ENCODE measurements at regions of chr3 and their contacts with region 1.

Region 1: GRCh38 chr3:73432023-73432705 is 192.6 kb downstream of the PDZRN3 start:
- DNase-seq: no peak
- ATAC-seq: no peak
- H3K4me3 ChIP-seq: no peak overlapping the region
- H3K27ac ChIP-seq: no peak overlapping the region
- H3K4me1 ChIP-seq: peaks cover 0 to 2% of the 10 kb centered on the region in 2 donors
- H3K27me3 ChIP-seq: no peaks in the 10 kb centered on the region

Region 2: DNA sequence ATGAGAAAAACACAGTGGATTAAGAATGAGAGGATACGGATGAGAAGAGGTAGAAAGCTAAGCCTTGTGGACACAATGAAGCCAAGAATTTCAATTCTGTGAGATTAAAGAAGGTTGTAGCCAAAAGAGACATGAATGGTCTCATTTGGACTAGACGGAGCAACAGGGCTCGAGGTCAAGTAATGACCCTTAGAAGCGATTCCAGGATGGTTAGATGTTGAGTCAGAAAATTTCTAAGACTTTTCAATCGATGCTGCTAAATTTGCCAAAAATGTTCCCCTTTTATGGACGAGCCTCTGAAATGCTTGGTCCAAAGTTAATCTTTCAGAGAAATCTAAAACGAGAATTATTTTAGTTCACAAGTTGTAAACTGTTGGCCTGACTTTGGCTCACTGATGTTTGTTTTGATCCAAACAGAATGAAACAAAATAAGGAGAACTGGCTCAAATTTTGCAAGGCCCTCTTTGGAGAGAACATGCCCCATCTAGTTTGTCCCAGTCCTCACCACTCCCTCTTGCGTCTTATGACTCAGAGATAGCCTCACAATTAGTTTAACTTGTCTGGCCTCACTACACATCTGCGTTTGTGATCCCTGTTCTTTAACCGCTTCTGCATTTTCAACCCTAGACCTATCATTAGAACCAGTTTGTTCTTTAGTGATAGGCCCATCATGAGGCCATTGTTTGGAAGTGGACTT is 42.9 kb before region 1 on chr3:
- intact Hi-C with region 1: loop called in 1 of 2 experiments (anchors 5 kb)
- DNase-seq: no peak
- ATAC-seq: peak; percentile 77
- H3K4me3 ChIP-seq: no peak overlapping the region
- H3K27ac ChIP-seq: peak overlapping the region in 1 of 2 donors; percentile 56
- H3K4me1 ChIP-seq: no peaks in the 10 kb centered on the region
- H3K27me3 ChIP-seq: no peaks in the 10 kb centered on the region

Measured in aorta (tissue), 5 donors.